Gastrocnemius medialis (tissue), 4 donors: ENCODE measurements at regions of chr17 and their contacts with region 1.

Region 1: DNA sequence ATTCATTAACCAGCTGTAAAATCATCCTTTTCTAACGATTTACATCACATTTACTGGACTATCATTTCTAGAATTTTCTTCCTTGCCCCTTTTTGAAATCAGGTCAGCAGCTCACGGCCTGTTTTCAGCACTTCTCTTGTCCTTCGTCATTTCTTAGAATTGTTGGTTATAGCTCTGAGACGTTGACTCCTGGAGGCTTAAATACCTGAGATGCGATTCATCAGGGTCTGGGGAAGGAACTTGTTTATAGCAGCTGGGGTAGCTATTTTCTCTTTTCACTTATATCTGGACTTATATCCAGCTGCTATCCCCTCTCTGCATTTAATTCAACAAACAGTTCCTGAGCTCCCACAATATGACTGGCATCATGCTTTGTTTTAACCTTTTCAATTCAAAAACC is 338.7 kb upstream of the TNRC6C start:
- DNase-seq: no peak
- ATAC-seq: no peak
- H3K4me3 ChIP-seq: no peak overlapping the region
- H3K27ac ChIP-seq: no peak overlapping the region
- H3K4me1 ChIP-seq: peaks cover 0 to 14% of the 10 kb centered on the region in 2 donors
- H3K27me3 ChIP-seq: no peaks in the 10 kb centered on the region
- CTCF ChIP-seq: no peak
- POLR2A ChIP-seq: no peak

Region 2: GRCh38 chr17:77581480-77581879 is 38.4 kb before region 1 on chr17:
- in situ Hi-C with region 1: no loop called
- intact Hi-C with region 1: loop called (anchors 5 kb)
- DNase-seq: no peak
- ATAC-seq: peak; percentile 55 to 76
- H3K4me3 ChIP-seq: no peak overlapping the region
- H3K27ac ChIP-seq: no peak overlapping the region
- H3K4me1 ChIP-seq: no peaks in the 10 kb centered on the region
- H3K27me3 ChIP-seq: no peaks in the 10 kb centered on the region
- CTCF ChIP-seq: no peak
- POLR2A ChIP-seq: no peak